ENCODE measurements at regions of chr3 and their contacts with region 1.

Region 1: GRCh38 chr3:39051647-39052561 is at the starts of genes SCN11A and WDR48:
- DNase-seq: peak; percentile 96
- ATAC-seq: peak; percentile 97
- H3K4me3 Mint-ChIP-seq: peak within 1 kb of the TSS; percentile 87
- H3K27ac Mint-ChIP-seq: peak within 1 kb of the TSS; percentile 97
- H3K4me1 Mint-ChIP-seq: peaks cover 45% of the 10 kb centered on the region
- H3K27me3 Mint-ChIP-seq: no peaks in the 10 kb centered on the region
- total RNA-seq, gene SCN11A: 0.07 to 0.09 TPM
- total RNA-seq, gene WDR48: 33.3 to 36.5 TPM

Region 2: DNA sequence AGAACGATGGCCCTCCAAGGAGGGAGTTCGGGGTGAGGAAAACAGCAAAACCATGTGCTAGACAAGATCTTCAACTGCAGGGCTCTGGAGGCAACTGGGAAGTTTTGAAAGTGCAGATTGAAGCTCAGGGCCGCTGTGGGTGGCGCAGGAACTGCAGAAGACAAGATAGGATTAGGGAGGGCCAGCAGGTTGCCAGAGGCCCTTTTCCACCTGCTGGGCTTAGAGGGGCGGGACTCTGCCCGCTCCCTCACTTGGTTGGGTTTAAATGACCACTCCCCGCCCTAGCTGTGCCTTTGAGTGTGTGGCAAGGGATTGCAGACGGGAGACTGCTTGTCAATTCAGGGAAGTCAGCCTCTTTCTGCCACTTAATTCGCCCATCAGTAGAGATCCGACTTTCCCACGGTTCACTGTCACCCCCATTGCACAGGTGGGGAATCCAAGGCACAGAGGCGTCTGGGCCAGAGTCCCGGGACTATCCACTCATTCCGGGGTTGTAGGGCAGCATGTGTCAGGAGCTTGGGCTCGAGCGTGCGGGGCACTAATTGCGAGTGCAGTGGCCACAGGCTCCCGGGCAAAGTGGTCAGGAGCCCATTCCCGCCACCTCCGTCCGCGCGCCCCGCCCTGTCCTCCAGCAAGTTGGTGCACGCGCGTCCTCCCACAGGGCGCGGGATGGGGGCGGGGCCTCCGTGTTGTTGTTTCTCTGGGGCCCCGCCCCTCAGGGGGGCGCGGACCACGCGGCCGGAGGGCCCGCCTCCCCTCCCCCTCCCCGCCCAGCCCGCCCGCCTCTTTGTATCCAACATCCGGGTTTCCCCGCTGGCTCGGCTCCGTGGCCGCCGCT is 598.6 kb before region 1 on chr3 and contains the start of gene ACVR2B:
- CTCF ChIA-PET with region 1: no interaction called
- POLR2A ChIA-PET with region 1: interaction called, 3 read pairs
- intact Hi-C with region 1: loop called in 1 of 2 experiments (anchors 5 kb)
- DNase-seq: peak; percentile 85
- ATAC-seq: peak; percentile 71
- H3K4me3 Mint-ChIP-seq: peak within 1 kb of the TSS; percentile 87
- H3K27ac Mint-ChIP-seq: peak within 1 kb of the TSS; percentile 81
- H3K4me1 Mint-ChIP-seq: peaks cover 9% of the 10 kb centered on the region
- H3K27me3 Mint-ChIP-seq: peaks cover 2% of the 10 kb centered on the region
- total RNA-seq, gene ACVR2B: 5.7 to 6.9 TPM

Region 3: DNA sequence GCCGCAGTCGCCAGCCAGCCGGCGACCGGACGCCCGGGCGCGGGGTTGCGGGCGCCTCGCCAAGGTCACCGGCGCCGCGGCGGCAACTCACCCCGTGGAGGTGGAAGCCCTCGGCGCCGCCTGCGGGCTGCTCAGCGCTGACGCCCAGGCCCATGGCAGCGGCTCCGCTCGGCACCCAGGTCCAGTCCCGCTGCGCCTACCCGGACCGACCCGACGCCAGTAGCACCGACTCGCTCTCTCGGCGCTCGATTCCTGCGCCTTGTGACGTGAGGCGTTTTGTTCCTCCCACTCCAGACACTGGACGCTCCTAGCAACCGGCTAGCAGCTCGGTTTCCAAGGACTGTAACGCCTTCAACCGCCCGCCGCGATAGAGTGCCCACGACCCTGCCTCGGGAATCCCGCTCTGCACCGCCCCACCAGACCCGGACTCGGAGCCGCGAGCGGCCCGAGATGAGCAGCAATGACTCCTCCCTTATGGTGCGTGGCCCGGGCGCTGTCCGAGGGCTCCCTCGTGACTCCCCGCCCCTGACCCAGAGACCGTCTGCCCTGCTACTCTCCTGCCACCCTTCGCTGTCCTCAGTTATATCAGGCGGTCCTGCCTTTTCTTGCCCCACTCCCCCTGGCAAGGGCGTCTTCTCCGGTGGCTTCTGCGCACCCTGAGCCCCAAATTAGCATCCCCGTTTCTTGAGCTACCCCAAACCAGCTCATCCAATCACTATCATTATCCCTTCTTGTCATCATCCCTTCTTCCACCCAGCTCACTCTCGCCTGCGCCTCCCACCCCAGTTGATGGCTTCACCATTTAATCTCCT is 55.7 kb after region 1 on chr3 and contains the starts of genes GORASP1 and TTC21A:
- CTCF ChIA-PET with region 1: no interaction called
- POLR2A ChIA-PET with region 1: no interaction called
- intact Hi-C with region 1: loop called in 1 of 2 experiments (anchors 2 kb)
- DNase-seq: peak; percentile 80
- ATAC-seq: peak; percentile 70
- H3K4me3 Mint-ChIP-seq: peak within 1 kb of the TSS; percentile 83
- H3K27ac Mint-ChIP-seq: peak within 1 kb of the TSS; percentile 77
- H3K4me1 Mint-ChIP-seq: peaks cover 36% of the 10 kb centered on the region
- H3K27me3 Mint-ChIP-seq: no peaks in the 10 kb centered on the region
- total RNA-seq, gene GORASP1: 23.0 to 23.8 TPM
- total RNA-seq, gene TTC21A: 1.8 to 2.3 TPM

Region 4: GRCh38 chr3:39146984-39147591 is 95.2 kb after region 1 on chr3:
- CTCF ChIA-PET with region 1: no interaction called
- POLR2A ChIA-PET with region 1: no interaction called
- intact Hi-C with region 1: loop called in 1 of 2 experiments (anchors 1 kb)
- DNase-seq: peak; percentile 90
- ATAC-seq: peak; percentile 68
- H3K4me3 Mint-ChIP-seq: peak overlapping the region; percentile 93
- H3K27ac Mint-ChIP-seq: peak overlapping the region; percentile 95
- H3K4me1 Mint-ChIP-seq: peaks cover 68% of the 10 kb centered on the region
- H3K27me3 Mint-ChIP-seq: no peaks in the 10 kb centered on the region

Region 5: GRCh38 chr3:39180546-39181346 is 128.8 kb after region 1 on chr3:
- CTCF ChIA-PET with region 1: no interaction called
- POLR2A ChIA-PET with region 1: no interaction called
- intact Hi-C with region 1: loop called in 1 of 2 experiments (anchors 2 kb)
- DNase-seq: peak; percentile 94
- ATAC-seq: peak; percentile 77
- H3K4me3 Mint-ChIP-seq: peak overlapping the region; percentile 77
- H3K27ac Mint-ChIP-seq: peak overlapping the region; percentile 82
- H3K4me1 Mint-ChIP-seq: peaks cover 48% of the 10 kb centered on the region
- H3K27me3 Mint-ChIP-seq: no peaks in the 10 kb centered on the region

Region 6: GRCh38 chr3:39383045-39383880 is 331.4 kb after region 1 on chr3 and contains the start of gene SLC25A38:
- CTCF ChIA-PET with region 1: no interaction called
- POLR2A ChIA-PET with region 1: no interaction called
- intact Hi-C with region 1: loop called in 1 of 2 experiments (anchors 1 kb)
- DNase-seq: peak; percentile 91
- ATAC-seq: peak; percentile 88
- H3K4me3 Mint-ChIP-seq: peak within 1 kb of the TSS; percentile 97
- H3K27ac Mint-ChIP-seq: peak within 1 kb of the TSS; percentile 97
- H3K4me1 Mint-ChIP-seq: peaks cover 43% of the 10 kb centered on the region
- H3K27me3 Mint-ChIP-seq: no peaks in the 10 kb centered on the region
- total RNA-seq, gene SLC25A38: 23.0 to 24.8 TPM

Region 7: DNA sequence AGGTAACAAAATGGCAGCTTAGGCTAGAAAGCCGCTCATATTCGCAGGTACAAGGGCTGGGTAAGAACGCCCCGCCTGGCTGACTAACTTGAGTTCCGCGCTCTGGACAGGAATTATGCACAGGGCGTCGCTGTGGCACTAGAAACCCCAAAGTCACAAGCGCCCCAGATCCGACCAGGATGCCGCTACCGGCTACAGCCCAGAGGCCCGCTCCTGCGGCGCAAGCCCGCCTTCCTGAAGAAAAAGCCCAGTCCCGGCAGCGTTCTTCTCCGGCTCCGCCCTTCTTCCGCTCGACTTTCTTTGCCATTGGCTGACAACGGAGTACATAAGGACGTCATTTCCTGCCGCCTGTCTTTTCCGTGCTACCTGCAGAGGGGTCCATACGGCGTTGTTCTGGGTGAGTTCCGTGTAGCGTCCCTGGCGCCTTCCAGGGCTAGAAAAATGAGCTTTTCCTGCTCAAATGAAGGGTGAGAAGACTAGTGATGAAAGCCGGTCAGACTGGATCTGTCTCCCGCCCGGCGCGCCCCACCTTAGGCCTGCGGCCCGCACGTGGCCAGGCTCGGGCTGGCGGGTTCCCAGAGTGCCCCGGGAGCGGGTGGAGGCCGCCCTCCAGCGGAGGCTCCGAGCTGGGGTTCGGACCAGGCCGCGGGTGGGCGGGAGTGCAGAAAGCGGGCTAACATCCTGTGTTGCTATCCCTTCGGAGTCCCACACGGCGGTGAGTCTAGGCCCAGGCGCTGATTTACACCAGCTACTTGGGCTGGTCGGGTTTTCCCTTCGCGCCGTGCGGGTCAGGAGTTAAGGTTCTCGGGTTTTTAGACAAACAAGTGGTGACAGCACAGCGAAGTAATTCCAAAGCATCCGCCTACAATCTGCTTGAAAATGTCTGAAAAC is 354.7 kb after region 1 on chr3 and contains the start of gene RPSA:
- CTCF ChIA-PET with region 1: no interaction called
- POLR2A ChIA-PET with region 1: no interaction called
- intact Hi-C with region 1: loop called in 1 of 2 experiments (anchors 1 kb)
- DNase-seq: peak; percentile 98
- ATAC-seq: peak; percentile 93
- H3K4me3 Mint-ChIP-seq: peak within 1 kb of the TSS; percentile 98
- H3K27ac Mint-ChIP-seq: peak within 1 kb of the TSS; percentile 98
- H3K4me1 Mint-ChIP-seq: peaks cover 39% of the 10 kb centered on the region
- H3K27me3 Mint-ChIP-seq: no peaks in the 10 kb centered on the region
- total RNA-seq, gene RPSA: 2,498 to 3,023 TPM

Measured in activated CD4-positive, alpha-beta T cell treated with anti-CD3 and anti-CD28 coated beads for 36 hours (primary cell).